AG04449 (cell line): ENCODE measurements at regions of chr12 and their contacts with region 1.

Region 1: GRCh38 chr12:8045952-8046944 is 13.7 kb downstream of the FOXJ2 start:
- DNase-seq: no peak
- H3K4me3 ChIP-seq: no peak overlapping the region
- CTCF ChIP-seq: peak; percentile 81

Region 2: GRCh38 chr12:8026291-8026900 is 19.9 kb before region 1 on chr12:
- CTCF ChIA-PET with region 1: interaction called, 10 read pairs
- POLR2A ChIA-PET with region 1: no interaction called
- DNase-seq: peak; percentile 96
- H3K4me3 ChIP-seq: peak overlapping the region; percentile 80
- CTCF ChIP-seq: no peak

Region 3: GRCh38 chr12:8032242-8033152 is 13.8 kb before region 1 on chr12 and contains the start of gene FOXJ2:
- CTCF ChIA-PET with region 1: interaction called, 66 read pairs
- POLR2A ChIA-PET with region 1: no interaction called
- DNase-seq: no peak
- H3K4me3 ChIP-seq: peak within 1 kb of the TSS; percentile 84
- CTCF ChIP-seq: no peak

Region 4: GRCh38 chr12:8065991-8066594 is 19.8 kb after region 1 on chr12 and contains the start of gene C3AR1:
- CTCF ChIA-PET with region 1: interaction called, 114 read pairs
- POLR2A ChIA-PET with region 1: no interaction called
- DNase-seq: no peak
- H3K4me3 ChIP-seq: no peak within 1 kb of the TSS
- CTCF ChIP-seq: no peak